HCT116 (cell line): ENCODE measurements at regions of chr5 and their contacts with region 1.

Region 1: DNA sequence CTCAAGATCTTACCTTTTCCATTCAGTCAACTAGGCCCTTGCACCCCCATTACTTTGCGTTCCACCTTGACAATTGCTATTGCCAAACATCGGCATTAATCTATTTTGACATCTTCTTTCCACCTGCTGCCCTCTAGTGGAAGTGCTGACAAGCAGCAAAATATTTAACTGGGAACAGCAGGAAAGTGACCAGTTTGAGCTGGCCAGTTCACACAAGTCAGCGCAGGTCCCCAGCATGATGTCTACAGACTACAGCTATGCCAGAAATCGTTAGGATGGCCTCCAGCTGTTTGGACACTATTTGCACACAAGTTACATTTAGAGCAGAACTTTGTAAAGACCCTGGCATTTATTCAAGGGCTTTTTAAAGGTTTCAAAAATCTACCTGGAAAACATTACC is 160.1 kb downstream of the GHR start:
- DNase-seq: peak; percentile 37
- ATAC-seq: peak; percentile 80
- H3K4me3 ChIP-seq: no peak overlapping the region
- H3K27ac ChIP-seq: no peak overlapping the region
- H3K4me1 ChIP-seq: no peaks in the 10 kb centered on the region
- H3K27me3 ChIP-seq: peaks cover 17% of the 10 kb centered on the region; the same call in 1 of the 2 replicates
- CTCF ChIP-seq: peak; percentile 40 to 88 (median 79); a peak in 5 of 6 replicates
- POLR2A ChIP-seq: no peak
- RAD21 ChIP-seq: peak; percentile 63

Region 2: DNA sequence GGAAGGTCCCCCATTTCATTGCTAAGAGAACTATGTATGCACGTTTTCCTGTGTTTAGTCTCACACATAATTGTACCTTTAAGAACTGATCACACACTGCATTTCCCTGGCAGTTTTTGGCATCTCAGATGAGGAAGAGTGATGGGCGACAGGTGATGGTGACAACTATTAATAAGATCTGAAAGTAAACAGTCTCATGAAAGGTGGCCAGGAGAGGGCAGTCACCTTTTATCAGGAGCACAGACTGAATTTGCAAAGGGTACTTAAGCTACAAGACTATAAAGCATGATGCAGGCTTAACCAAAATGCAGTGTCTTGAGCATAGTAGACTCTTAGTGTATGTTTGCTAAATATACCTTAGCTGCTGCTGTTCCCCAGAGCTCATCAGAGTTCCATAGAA is 68.6 kb before region 1 on chr5:
- CTCF ChIA-PET with region 1: interaction called, 11 read pairs
- POLR2A ChIA-PET with region 1: no interaction called
- RAD21 ChIA-PET with region 1: no interaction called
- intact Hi-C with region 1: no loop called
- DNase-seq: no peak
- ATAC-seq: peak; percentile 55; the same call in 1 of the 2 replicates
- H3K4me3 ChIP-seq: no peak overlapping the region
- H3K27ac ChIP-seq: no peak overlapping the region
- H3K4me1 ChIP-seq: no peaks in the 10 kb centered on the region
- H3K27me3 ChIP-seq: no peaks in the 10 kb centered on the region
- CTCF ChIP-seq: peak in 2 of 3 experiments; percentile 10 to 21; a peak in 2 of 6 replicates
- POLR2A ChIP-seq: no peak
- RAD21 ChIP-seq: no peak

Region 3: DNA sequence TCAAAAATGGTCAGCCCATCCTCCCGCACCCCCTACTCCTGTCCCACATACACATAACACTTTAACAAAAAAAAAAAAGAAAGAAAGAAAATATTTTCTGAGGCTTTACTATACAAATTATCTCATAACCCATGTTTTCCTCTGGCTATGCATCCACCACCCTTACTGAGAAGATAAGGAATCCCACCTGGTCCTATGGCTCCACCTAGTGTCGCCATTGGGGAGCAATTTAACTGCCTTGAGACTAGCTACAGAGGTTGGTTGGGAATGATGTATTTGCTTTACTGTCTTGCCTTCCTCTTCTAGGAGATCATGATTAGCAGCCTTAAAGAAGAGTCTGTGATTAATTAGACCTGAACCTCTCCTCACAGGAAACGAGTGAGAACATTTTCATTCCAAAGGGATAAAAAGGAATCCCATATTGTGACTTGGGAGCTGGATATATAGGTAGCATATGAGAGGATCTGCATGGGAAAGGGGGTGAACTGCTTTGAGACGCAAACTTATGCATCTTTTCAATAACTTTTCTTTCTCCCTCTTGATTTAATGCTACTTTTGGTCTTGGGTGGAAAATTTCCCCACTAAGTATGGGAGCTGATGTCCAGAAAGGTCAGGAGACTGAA is 306.1 kb after region 1 on chr5:
- CTCF ChIA-PET with region 1: interaction called, 19 read pairs
- POLR2A ChIA-PET with region 1: no interaction called
- RAD21 ChIA-PET with region 1: no interaction called
- intact Hi-C with region 1: loop called (anchors 5 kb)
- DNase-seq: peak; percentile 66
- ATAC-seq: peak; percentile 94
- H3K4me3 ChIP-seq: no peak overlapping the region
- H3K27ac ChIP-seq: no peak overlapping the region
- H3K4me1 ChIP-seq: peaks cover 0 to 4% of the 10 kb centered on the region in 2 experiments; a peak in 2 of 4 replicates
- H3K27me3 ChIP-seq: peaks cover 5% of the 10 kb centered on the region
- CTCF ChIP-seq: peak; percentile 52 to 93 (median 86); a peak in 5 of 6 replicates
- POLR2A ChIP-seq: no peak
- RAD21 ChIP-seq: peak; percentile 85